GM23248 (cell line): ENCODE measurements at regions of chr4 and their contacts with region 1.

Region 1: DNA sequence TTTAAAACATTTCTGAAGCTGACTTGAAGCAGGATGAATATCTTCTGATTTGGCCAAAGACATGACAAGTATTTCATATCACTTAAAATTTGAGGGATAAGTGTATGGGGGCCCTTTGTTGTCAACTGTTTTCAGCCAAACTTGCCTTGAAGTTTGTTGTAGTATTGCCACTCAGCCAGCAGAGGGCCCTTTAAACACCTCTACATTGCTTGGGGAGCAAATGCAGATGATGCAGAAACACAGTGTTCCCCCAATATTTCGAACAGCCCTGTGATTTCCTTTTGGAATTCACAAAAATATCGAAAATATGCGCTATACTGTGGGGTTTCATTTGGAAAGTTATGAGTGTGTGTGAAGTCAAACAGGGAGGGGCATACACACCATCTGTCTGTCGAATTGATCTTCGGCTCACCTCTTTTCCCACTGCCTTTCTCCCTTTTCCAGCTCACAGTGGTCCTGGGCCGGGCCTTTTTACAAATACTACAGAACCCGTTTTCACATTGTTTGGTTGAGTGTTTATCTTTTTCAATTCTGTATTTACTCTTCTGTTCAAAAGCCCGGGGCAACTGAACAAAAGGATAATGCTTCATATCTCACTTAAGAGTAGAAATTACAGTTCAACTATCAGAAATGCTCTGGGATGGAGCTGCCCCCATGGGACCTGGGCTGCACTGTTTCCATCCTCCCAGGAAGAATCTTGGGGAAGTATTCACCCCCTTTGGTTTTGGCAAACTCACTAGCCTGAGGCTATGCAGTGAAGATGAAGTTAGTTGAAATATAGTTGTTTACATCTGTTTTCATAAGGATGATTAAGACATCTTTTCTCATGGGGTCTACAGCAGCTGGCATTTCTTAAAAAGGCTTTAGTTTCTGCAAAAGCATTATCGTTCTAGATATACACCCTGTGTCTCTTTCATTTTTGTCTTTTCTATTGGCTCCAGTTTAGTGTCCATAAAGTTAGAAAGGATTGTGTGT is 137.6 kb downstream of the EGF start:
- DNase-seq: peak; percentile 62
- H3K4me3 ChIP-seq: no peak overlapping the region
- H3K27ac ChIP-seq: no peak overlapping the region
- H3K4me1 ChIP-seq: no peaks in the 10 kb centered on the region
- H3K27me3 ChIP-seq: no peaks in the 10 kb centered on the region

Region 2: DNA sequence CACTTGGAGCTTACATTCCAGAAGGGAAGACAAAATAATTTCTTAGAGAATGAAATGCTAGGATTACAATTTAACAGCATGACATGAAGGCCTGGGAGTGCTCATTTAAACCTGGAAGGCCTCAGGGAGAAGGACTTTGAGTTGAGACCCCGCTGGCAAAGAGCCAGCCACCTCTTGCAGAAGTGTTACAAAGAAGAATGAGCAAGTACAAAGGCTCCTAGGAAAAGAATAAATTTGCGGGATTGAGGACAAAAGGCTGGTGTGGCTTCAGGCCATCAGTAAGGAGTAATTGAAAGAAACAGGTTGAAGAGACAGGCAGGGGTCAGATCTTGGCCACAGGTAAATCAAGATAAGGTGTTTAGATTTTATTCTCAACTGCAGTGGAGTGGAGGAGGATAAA is 151.3 kb after region 1 on chr4:
- in situ Hi-C with region 1: loop called (anchors 10 kb)
- DNase-seq: no peak
- H3K4me3 ChIP-seq: no peak overlapping the region
- H3K27ac ChIP-seq: no peak overlapping the region
- H3K4me1 ChIP-seq: no peaks in the 10 kb centered on the region
- H3K27me3 ChIP-seq: no peaks in the 10 kb centered on the region